ENCODE measurements at regions of chr15 and their contacts with region 1.

Region 1: DNA sequence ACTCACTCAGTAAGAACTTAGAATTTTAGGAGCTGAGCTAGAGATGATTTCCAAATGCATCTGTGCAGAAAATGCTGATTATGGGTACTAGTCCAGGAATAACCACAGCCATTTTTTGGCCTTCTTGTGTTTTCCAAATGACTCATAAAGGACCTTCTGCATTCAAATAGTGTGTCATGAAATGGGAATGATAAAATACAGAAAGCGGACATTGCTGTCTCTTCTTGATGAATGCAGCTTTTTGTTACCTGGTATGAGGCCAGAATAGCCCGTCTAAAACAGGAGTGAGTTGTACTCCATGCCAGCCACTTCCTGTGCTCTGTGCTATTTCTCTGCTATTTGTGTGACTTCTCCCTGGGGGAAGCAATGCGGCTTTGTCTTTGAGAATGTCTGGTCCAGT is 20.5 kb upstream of the FRMD5 start:
- DNase-seq: no peak
- ATAC-seq: peak in 1 of 2 donors; percentile 48

Region 2: DNA sequence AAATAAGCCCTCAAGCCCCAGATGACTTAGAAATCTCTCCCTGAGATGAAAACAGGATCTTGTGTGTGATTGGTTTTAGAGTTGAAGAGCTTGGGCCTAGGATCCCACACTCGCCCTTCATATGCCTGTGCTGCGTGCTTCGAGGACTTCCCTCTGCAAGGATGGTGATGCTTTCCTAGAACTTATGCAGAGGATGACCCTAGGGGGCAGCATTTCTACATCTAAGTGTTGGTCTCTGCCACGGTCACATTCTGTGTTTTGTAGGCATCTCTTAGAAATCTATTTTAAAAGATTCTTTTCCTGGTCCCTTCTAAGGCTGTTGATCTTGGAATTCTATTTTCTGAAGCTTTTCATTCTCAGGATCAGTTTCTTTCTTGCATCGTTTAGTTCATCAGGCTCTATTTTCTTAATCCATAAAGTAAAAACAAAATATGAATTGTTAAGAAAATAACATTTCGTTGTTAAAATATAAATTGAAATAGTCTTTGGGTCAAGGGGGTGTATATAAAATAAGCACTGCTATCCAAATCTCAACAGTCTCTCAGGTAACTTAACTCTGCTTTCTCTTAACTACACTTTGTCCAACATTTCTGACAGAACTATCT is 343.1 kb before region 1 on chr15:
- intact Hi-C with region 1: loop called in 1 of 2 experiments (anchors 10 kb)
- DNase-seq: peak; percentile 46
- ATAC-seq: peak; percentile 82

Region 3: GRCh38 chr15:43903864-43904290 is 311.7 kb before region 1 on chr15:
- intact Hi-C with region 1: loop called (anchors 5 to 10 kb)
- DNase-seq: no peak
- ATAC-seq: peak; percentile 76 to 84

Region 4: GRCh38 chr15:44147636-44148035 is 68.0 kb before region 1 on chr15:
- intact Hi-C with region 1: no loop called
- DNase-seq: no peak
- ATAC-seq: no peak

Region 5: GRCh38 chr15:44282101-44282500 is 66.5 kb after region 1 on chr15:
- intact Hi-C with region 1: no loop called
- DNase-seq: no peak
- ATAC-seq: no peak

Region 6: DNA sequence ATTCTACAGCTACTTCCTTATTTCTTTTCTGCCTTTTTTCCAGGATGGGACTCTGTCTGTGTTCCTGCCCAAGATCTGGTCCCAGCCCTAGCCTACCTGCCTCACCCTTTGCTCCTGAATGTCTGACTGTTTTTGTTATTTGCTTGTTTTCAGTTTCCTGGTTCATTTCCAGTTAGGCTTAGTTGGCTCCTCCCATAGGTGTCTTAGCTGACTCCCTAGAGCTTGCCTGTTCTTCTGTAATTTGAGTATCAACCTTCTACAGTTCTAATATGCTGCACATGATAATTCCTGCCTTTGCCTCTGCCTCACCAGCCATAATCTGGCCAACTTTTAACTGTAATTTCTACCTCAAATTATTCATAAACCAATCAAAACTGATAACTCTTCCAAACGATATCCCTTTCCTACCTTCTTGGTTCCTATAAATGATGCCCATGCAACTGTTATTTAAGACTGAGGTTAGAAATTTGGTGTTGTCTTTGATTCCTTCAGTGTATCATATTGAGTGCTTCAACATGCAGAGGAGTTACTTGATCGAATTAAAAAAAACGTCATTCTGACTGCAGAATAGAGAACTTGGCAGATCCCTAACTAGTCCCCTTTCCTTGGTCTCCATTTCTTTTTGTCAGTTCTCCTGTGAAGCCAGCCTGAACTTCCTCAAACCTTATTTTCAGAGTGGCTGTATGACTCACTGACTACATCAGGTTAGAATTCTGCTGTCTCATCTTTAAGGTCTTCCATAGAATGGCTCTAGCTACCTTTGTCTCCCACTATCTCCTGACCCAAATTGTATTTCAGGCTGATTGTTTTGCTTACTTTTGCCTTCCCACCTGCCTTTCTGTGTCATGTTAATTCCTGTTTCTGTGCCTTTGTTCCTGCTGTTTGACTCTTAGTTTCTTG is 81.3 kb after region 1 on chr15:
- intact Hi-C with region 1: no loop called
- DNase-seq: no peak
- ATAC-seq: peak; percentile 15 to 84

Measured in left cardiac atrium (tissue), 4 donors.